Breast epithelium (tissue), 4 donors: ENCODE measurements at regions of chr15 and their contacts with region 1.

Region 1: GRCh38 chr15:86906391-86906790 is 826.7 kb downstream of the AGBL1 start:
- DNase-seq: no peak
- H3K4me3 ChIP-seq: no peak overlapping the region
- H3K27ac ChIP-seq: no peak overlapping the region
- H3K4me1 ChIP-seq: no peaks in the 10 kb centered on the region
- H3K27me3 ChIP-seq: no peaks in the 10 kb centered on the region
- CTCF ChIP-seq: no peak
- POLR2A ChIP-seq: no peak

Region 2: GRCh38 chr15:88018856-88019641 is 1112.7 kb after region 1 on chr15:
- intact Hi-C with region 1: loop called (anchors 5 kb)
- DNase-seq: peak in 1 of 2 donors; percentile 31
- H3K4me3 ChIP-seq: no peak overlapping the region
- H3K27ac ChIP-seq: peak overlapping the region; percentile 35 to 80
- H3K4me1 ChIP-seq: no peaks in the 10 kb centered on the region
- H3K27me3 ChIP-seq: no peaks in the 10 kb centered on the region
- CTCF ChIP-seq: no peak
- POLR2A ChIP-seq: no peak